T-cell (primary cell): ENCODE measurements at regions of chr3 and their contacts with region 1.

Region 1: DNA sequence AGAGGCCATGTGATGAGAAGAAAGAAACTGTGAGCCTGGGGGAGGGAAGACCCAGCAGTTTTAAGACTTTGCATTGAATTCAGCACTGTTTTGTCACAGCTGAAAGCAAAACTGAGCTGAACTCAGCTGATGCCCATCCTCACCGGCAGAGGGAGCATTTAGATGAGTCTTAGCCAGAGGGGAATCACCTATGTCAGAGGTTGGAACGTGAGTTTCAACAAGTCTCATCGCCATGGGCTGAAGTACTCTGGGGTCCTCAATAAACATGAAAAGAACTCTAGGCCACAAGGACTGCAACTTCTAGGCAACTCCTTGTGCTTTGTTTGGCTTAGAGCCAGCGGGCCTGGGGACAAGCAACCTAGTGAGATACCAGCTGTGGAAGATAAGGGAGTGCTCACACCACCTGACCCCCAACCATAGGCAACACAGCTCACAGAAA is 324.5 kb downstream of the TBL1XR1 start:
- DNase-seq: peak in 30 of 35 experiments; percentile 16 to 70 (median 36)
- ATAC-seq: peak; percentile 70 to 79 (median 72)
- H3K4me3 ChIP-seq: no peak overlapping the region
- H3K4me3 Mint-ChIP-seq: no peak overlapping the region
- H3K27ac ChIP-seq: no peak overlapping the region
- H3K27ac Mint-ChIP-seq: peak overlapping the region in 1 of 2 donors; percentile 44
- H3K4me1 ChIP-seq: no peaks in the 10 kb centered on the region
- H3K4me1 Mint-ChIP-seq: peaks cover 6 to 7% (median 7%) of the 10 kb centered on the region in 3 donors
- H3K27me3 ChIP-seq: peaks cover 0 to 17% of the 10 kb centered on the region in 2 experiments
- H3K27me3 Mint-ChIP-seq: peaks cover 0 to 5% of the 10 kb centered on the region in 2 donors

Region 2: GRCh38 chr3:176840641-176841286 is 32.0 kb before region 1 on chr3:
- CTCF ChIA-PET with region 1: no interaction called
- POLR2A ChIA-PET with region 1: no interaction called
- DNase-seq: no peak
- ATAC-seq: no peak
- H3K4me3 ChIP-seq: no peak overlapping the region
- H3K4me3 Mint-ChIP-seq: no peak overlapping the region
- H3K27ac ChIP-seq: no peak overlapping the region
- H3K27ac Mint-ChIP-seq: no peak overlapping the region
- H3K4me1 ChIP-seq: no peaks in the 10 kb centered on the region
- H3K4me1 Mint-ChIP-seq: no peaks in the 10 kb centered on the region
- H3K27me3 ChIP-seq: no peaks in the 10 kb centered on the region
- H3K27me3 Mint-ChIP-seq: peaks cover 0 to 3% of the 10 kb centered on the region in 2 donors

Region 3: GRCh38 chr3:176939022-176939817 is 66.4 kb after region 1 on chr3:
- CTCF ChIA-PET with region 1: interaction called, 13 to 17 read pairs
- POLR2A ChIA-PET with region 1: no interaction called
- DNase-seq: peak in 22 of 35 experiments; percentile 0 to 62 (median 14)
- ATAC-seq: peak; percentile 45 to 65 (median 48)
- H3K4me3 ChIP-seq: no peak overlapping the region
- H3K4me3 Mint-ChIP-seq: no peak overlapping the region
- H3K27ac ChIP-seq: no peak overlapping the region
- H3K27ac Mint-ChIP-seq: no peak overlapping the region
- H3K4me1 ChIP-seq: no peaks in the 10 kb centered on the region
- H3K4me1 Mint-ChIP-seq: no peaks in the 10 kb centered on the region
- H3K27me3 ChIP-seq: no peaks in the 10 kb centered on the region
- H3K27me3 Mint-ChIP-seq: peaks cover 6 to 13% of the 10 kb centered on the region in 2 donors

Region 4: GRCh38 chr3:178385280-178385952 is 1512.6 kb after region 1 on chr3:
- CTCF ChIA-PET with region 1: interaction called, 11 to 25 read pairs
- POLR2A ChIA-PET with region 1: no interaction called
- DNase-seq: peak in 8 of 35 experiments; percentile 1 to 55 (median 10)
- ATAC-seq: no peak
- H3K4me3 ChIP-seq: no peak overlapping the region
- H3K4me3 Mint-ChIP-seq: no peak overlapping the region
- H3K27ac ChIP-seq: no peak overlapping the region
- H3K27ac Mint-ChIP-seq: no peak overlapping the region
- H3K4me1 ChIP-seq: no peaks in the 10 kb centered on the region
- H3K4me1 Mint-ChIP-seq: no peaks in the 10 kb centered on the region
- H3K27me3 ChIP-seq: no peaks in the 10 kb centered on the region
- H3K27me3 Mint-ChIP-seq: peaks cover 9% of the 10 kb centered on the region in 2 donors